ENCODE measurements at regions of chr2 and their contacts with region 1.

Region 1: DNA sequence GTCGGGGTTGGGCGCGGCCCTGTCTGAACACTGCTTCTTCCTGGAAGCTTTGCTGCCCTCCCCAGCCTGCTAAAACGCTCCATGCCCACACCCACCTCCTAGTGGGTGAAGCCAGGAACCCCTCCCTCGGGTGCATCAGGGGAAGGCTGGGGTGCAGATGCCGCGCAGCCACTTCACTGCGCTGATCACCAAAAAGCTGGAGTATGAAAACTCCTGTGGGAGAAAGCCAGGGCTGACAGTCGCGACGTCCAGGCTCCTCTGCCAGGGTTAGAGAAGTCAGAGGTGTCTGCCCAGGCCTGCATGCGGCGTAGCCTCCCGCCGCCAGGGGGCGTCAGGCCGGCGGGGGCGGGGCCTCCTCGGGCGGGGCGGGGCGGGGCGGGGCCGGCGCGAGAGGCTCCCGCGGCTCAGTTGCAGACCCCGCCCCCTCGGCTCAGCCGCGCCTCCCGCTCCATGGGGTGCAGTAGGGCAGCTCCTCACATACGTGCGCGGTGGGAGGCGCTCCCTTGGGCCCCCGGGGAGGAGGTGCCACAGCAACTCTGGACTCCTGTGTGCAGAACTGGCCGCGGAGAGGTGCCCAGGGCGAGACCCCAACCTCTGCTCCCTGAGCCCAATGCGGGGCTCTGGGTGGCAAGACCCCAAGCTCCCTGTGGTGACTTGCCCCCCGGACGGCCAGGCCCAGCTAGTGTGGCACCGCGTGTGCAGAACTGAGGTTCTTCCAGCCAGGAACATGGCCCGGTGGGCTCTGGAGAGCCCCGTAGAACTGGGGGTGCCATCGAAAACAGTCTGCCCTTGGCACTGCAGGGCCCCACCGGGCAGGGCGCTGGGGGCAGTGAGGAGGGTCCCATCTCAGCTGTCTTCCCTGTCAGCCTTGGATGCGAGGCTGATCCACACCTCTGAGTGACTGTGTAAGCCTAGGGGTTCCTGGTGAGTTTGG is 1.8 kb upstream of the RNPEPL1 start:
- DNase-seq: peak; percentile 97
- H3K4me3 Mint-ChIP-seq: peak overlapping the region; percentile 91
- H3K27ac Mint-ChIP-seq: peak overlapping the region; percentile 99
- H3K4me1 Mint-ChIP-seq: peaks cover 67% of the 10 kb centered on the region
- H3K27me3 Mint-ChIP-seq: no peaks in the 10 kb centered on the region

Region 2: GRCh38 chr2:240369801-240370585 is 196.5 kb before region 1 on chr2:
- CTCF ChIA-PET with region 1: no interaction called
- POLR2A ChIA-PET with region 1: no interaction called
- DNase-seq: no peak
- H3K4me3 Mint-ChIP-seq: no peak overlapping the region
- H3K27ac Mint-ChIP-seq: no peak overlapping the region
- H3K4me1 Mint-ChIP-seq: no peaks in the 10 kb centered on the region
- H3K27me3 Mint-ChIP-seq: no peaks in the 10 kb centered on the region

Region 3: GRCh38 chr2:240554767-240555493 is 11.5 kb before region 1 on chr2:
- CTCF ChIA-PET with region 1: interaction called, 29 read pairs
- POLR2A ChIA-PET with region 1: interaction called, 3 read pairs
- DNase-seq: no peak
- H3K4me3 Mint-ChIP-seq: no peak overlapping the region
- H3K27ac Mint-ChIP-seq: peak overlapping the region; percentile 36
- H3K4me1 Mint-ChIP-seq: peaks cover 33% of the 10 kb centered on the region
- H3K27me3 Mint-ChIP-seq: no peaks in the 10 kb centered on the region

Region 4: GRCh38 chr2:240579771-240580614 is 13.5 kb after region 1 on chr2:
- CTCF ChIA-PET with region 1: interaction called, 67 read pairs
- POLR2A ChIA-PET with region 1: interaction called, 9 read pairs
- DNase-seq: peak; percentile 77
- H3K4me3 Mint-ChIP-seq: no peak overlapping the region
- H3K27ac Mint-ChIP-seq: peak overlapping the region; percentile 85
- H3K4me1 Mint-ChIP-seq: peaks cover 53% of the 10 kb centered on the region
- H3K27me3 Mint-ChIP-seq: no peaks in the 10 kb centered on the region

Region 5: DNA sequence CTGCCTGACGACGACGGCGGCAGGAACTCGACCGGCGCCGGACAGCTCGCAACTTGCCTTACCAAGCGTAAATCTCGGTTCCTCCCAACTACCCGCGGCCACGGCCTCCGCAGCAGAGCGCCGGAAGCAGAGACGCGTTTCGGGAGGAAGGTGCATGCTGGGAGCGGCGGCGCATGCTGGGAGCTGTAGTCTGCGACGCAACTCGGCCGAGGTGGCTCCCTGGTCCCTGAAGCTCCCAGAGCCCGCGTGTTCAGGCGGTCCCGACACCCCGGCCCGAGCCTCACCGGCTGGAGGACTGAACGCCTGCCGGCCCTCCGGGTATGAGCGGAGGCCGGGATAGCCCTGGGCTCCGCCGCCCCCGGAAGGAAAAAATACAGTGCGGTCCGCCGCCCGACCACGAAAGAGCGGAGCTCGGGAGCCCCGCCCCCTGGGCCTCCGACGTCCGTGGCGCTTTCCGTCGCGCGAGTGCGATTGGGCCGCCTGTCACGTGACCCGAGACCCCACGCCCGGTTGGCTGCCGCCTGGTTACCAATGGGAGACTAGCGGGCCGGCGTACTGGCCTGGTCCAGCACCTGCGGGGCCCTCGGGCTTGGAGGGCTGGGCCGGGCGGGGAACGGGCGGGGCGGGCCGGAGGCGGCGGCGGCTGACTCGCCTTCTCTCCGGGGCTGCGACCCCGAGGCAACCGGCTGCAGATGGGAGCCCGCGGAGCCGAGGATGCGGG is 19.9 kb after region 1 on chr2 and contains the start of gene CAPN10:
- CTCF ChIA-PET with region 1: interaction called, 67 read pairs
- POLR2A ChIA-PET with region 1: interaction called, 11 read pairs
- DNase-seq: peak; percentile 97
- H3K4me3 Mint-ChIP-seq: peak within 1 kb of the TSS; percentile 92
- H3K27ac Mint-ChIP-seq: peak within 1 kb of the TSS; percentile 93
- H3K4me1 Mint-ChIP-seq: peaks cover 56% of the 10 kb centered on the region
- H3K27me3 Mint-ChIP-seq: no peaks in the 10 kb centered on the region
- total RNA-seq, gene CAPN10: 40.5 to 58.6 TPM

Region 6: DNA sequence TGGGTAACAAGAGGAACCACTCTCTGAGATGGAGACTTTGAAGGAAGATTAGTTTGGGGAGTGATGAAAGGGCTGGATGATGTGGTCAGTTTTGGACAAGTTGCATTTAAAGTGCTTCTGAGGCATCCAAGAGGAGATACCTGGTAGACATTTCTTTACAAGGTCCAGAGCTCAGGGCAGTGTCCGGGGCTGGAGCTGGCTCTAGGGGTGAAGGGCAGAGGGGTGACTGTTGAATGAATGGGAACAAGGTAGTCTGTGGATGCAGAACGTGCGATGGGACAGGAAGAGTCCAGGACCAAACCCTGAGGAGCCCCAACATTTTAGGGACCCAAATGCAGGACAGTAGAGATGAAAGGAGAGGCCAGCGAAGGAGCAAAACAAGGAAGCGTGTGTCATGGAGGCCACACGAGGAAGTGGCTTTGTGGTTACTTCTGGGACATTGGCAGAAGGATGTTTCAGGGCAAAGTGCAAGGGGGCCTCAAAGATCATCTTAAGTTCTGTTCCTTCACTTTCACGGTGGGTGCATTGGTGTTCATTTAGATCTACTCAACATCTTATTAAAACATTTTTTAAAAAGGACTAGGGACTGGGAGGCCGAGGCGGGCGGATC is 45.2 kb after region 1 on chr2:
- CTCF ChIA-PET with region 1: interaction called, 17 read pairs
- POLR2A ChIA-PET with region 1: no interaction called
- DNase-seq: peak; percentile 31
- H3K4me3 Mint-ChIP-seq: peak overlapping the region; percentile 30
- H3K27ac Mint-ChIP-seq: no peak overlapping the region
- H3K4me1 Mint-ChIP-seq: peaks cover 2% of the 10 kb centered on the region
- H3K27me3 Mint-ChIP-seq: no peaks in the 10 kb centered on the region

Region 7: DNA sequence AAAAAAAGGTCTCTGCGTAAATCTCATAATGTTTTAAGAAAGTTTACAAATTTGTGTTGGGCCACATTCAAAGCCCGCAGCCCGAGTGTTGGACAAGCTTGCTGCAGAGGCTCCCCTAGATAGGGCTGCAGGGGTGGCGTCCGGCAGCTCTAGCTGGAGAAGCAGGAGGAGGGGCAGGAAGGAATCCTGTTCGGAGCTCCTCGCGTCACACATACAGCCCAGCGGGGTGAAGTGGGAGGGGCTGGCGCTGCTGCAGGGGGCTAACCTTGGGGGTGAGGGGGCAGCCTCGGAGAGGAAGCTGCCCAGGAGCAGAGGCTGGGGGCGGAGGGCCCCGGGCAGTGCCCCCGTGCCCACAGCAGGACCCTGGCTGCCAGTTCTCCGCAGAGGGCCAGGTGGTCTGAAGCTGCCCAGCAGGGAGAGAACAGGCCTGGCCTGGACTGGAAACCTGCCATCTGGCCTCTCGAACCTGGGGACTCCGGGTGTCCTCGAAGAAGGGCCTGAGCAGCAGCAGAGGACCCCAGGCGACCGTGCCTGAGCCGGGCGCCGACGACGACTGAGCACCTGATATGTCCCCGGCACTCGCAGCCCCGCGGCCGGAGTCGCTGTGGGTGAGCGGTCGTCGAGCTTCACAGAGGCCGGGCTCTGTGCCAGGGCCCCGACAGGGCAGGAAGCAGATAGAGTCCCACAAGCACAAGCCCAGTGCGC is 56.2 kb after region 1 on chr2:
- CTCF ChIA-PET with region 1: interaction called, 29 read pairs
- POLR2A ChIA-PET with region 1: no interaction called
- DNase-seq: peak; percentile 53
- H3K4me3 Mint-ChIP-seq: no peak overlapping the region
- H3K27ac Mint-ChIP-seq: peak overlapping the region; percentile 96
- H3K4me1 Mint-ChIP-seq: peaks cover 72% of the 10 kb centered on the region
- H3K27me3 Mint-ChIP-seq: no peaks in the 10 kb centered on the region